Activated CD8-positive, alpha-beta memory T cell treated with anti-CD3 and anti-CD28 coated beads, Interleukin-2, amount 10 ng/mL, durations not matched to agents 7 days and 5 days (primary cell): ENCODE measurements at regions of chr22 and their contacts with region 1.

Region 1: GRCh38 chr22:43385770-43386641 is 25.8 kb upstream of the MPPED1 start:
- DNase-seq: peak; percentile 83
- ATAC-seq: peak; percentile 89
- H3K4me3 Mint-ChIP-seq: no peak overlapping the region
- H3K27ac Mint-ChIP-seq: no peak overlapping the region
- H3K4me1 Mint-ChIP-seq: peaks cover 36% of the 10 kb centered on the region
- H3K27me3 Mint-ChIP-seq: peaks cover 61% of the 10 kb centered on the region

Region 2: GRCh38 chr22:43263645-43264514 is 122.1 kb before region 1 on chr22:
- CTCF ChIA-PET with region 1: interaction called, 14 read pairs
- DNase-seq: peak; percentile 96
- ATAC-seq: peak; percentile 90
- H3K4me3 Mint-ChIP-seq: peak overlapping the region; percentile 68
- H3K27ac Mint-ChIP-seq: peak overlapping the region; percentile 92
- H3K4me1 Mint-ChIP-seq: peaks cover 31% of the 10 kb centered on the region
- H3K27me3 Mint-ChIP-seq: peaks cover 6% of the 10 kb centered on the region

Region 3: GRCh38 chr22:43356881-43357280 is 29.1 kb before region 1 on chr22:
- CTCF ChIA-PET with region 1: interaction called, 10 read pairs
- DNase-seq: no peak
- ATAC-seq: no peak
- H3K4me3 Mint-ChIP-seq: no peak overlapping the region
- H3K27ac Mint-ChIP-seq: no peak overlapping the region
- H3K4me1 Mint-ChIP-seq: peaks cover 3% of the 10 kb centered on the region
- H3K27me3 Mint-ChIP-seq: peaks cover 28% of the 10 kb centered on the region